ENCODE measurements at regions of chr10 and their contacts with region 1.

Region 1: GRCh38 chr10:102583435-102584417 is 60.6 kb upstream of the TRIM8 start:
- DNase-seq: peak; percentile 87 to 94 (median 90)
- H3K4me3 ChIP-seq: no peak overlapping the region
- H3K27ac ChIP-seq: peak overlapping the region in 1 of 2 experiments; percentile 11
- H3K4me1 ChIP-seq: peaks cover 3 to 20% (median 14%) of the 10 kb centered on the region in 4 experiments
- H3K27me3 ChIP-seq: no peaks in the 10 kb centered on the region

Region 2: DNA sequence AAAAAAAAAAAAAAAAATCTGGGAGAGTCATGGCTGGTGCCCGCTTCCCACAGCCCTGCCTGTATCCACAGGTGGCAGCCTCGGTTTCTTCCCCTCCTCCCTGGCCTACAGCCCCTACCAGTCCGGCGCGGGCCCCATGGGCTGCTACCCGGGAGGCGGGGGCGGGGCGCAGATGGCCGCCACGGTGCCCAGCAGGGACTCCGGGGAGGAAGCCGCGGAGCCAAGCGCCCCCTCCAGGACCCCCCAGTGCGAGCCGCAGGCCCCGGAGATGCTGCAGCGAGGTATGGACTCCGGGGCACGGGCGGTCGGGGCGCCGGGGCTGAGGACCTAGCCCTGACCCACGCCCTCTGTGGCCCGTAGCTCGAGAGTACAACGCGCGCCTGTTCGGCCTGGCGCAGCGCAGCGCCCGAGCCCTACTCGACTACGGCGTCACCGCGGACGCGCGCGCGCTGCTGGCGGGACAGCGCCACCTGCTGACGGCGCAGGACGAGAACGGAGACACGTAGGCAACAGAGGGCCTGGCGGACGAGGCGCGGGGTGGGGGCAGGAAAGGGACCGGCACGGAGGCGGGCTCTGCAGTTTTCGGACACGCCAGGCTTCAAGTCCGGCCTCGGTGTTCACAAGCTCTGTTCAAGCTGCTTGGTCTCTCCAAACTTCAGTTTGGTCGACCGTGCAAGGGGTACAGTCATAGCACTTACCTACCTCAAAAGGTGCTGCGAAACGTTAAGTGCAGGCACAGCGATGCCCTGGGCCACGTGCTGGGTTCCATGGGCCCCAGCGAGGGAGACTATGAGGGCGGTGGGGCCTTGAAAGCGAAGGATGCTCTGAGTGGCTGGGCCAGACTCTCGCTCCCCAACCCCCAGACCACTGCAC is 184.3 kb before region 1 on chr10:
- CTCF ChIA-PET with region 1: interaction called, 16 read pairs
- POLR2A ChIA-PET with region 1: interaction called, 4 read pairs
- DNase-seq: peak; percentile 88 to 92 (median 92)
- H3K4me3 ChIP-seq: peak overlapping the region; percentile 32 to 75 (median 44)
- H3K27ac ChIP-seq: no peak overlapping the region
- H3K4me1 ChIP-seq: peaks cover 0 to 33% (median 28%) of the 10 kb centered on the region in 4 experiments
- H3K27me3 ChIP-seq: no peaks in the 10 kb centered on the region

Region 3: GRCh38 chr10:102503281-102504220 is 80.2 kb before region 1 on chr10 and contains the start of gene SUFU:
- CTCF ChIA-PET with region 1: interaction called, 30 read pairs
- POLR2A ChIA-PET with region 1: interaction called, 5 read pairs
- DNase-seq: peak; percentile 99 to 100 (median 99)
- H3K4me3 ChIP-seq: peak within 1 kb of the TSS; percentile 74 to 99 (median 96)
- H3K27ac ChIP-seq: peak within 1 kb of the TSS; percentile 25 to 93
- H3K4me1 ChIP-seq: peaks cover 20 to 51% (median 36%) of the 10 kb centered on the region in 4 experiments
- H3K27me3 ChIP-seq: no peaks in the 10 kb centered on the region

Region 4: GRCh38 chr10:102555781-102556328 is 27.9 kb before region 1 on chr10:
- CTCF ChIA-PET with region 1: no interaction called
- POLR2A ChIA-PET with region 1: no interaction called
- DNase-seq: no peak
- H3K4me3 ChIP-seq: no peak overlapping the region
- H3K27ac ChIP-seq: no peak overlapping the region
- H3K4me1 ChIP-seq: no peaks in the 10 kb centered on the region
- H3K27me3 ChIP-seq: no peaks in the 10 kb centered on the region

Region 5: GRCh38 chr10:102604379-102604960 is 20.7 kb after region 1 on chr10:
- CTCF ChIA-PET with region 1: interaction called, 16 read pairs
- POLR2A ChIA-PET with region 1: no interaction called
- DNase-seq: peak; percentile 52 to 79 (median 73)
- H3K4me3 ChIP-seq: peak overlapping the region in 2 of 7 experiments; percentile 17 to 29
- H3K27ac ChIP-seq: peak overlapping the region; percentile 56 to 91
- H3K4me1 ChIP-seq: peaks cover 9 to 65% (median 56%) of the 10 kb centered on the region in 4 experiments
- H3K27me3 ChIP-seq: no peaks in the 10 kb centered on the region

Region 6: DNA sequence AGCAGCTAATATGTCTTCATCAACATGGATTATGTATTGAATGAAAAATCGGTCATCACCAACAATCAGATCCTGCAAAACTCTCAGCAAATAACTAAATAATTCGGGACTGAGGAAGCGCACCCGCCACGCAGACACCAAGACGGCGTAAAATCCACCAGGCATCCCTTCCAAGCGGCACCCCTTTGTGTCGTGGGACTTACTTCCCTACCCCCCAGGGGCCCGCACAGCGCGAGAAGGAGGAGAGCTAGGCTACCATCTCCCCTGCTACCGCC is 129.8 kb after region 1 on chr10:
- CTCF ChIA-PET with region 1: no interaction called
- POLR2A ChIA-PET with region 1: no interaction called
- DNase-seq: no peak
- H3K4me3 ChIP-seq: peak overlapping the region; percentile 84 to 100 (median 96)
- H3K27ac ChIP-seq: peak overlapping the region; percentile 90 to 97
- H3K4me1 ChIP-seq: peaks cover 8 to 52% (median 26%) of the 10 kb centered on the region in 4 experiments
- H3K27me3 ChIP-seq: no peaks in the 10 kb centered on the region